Heart left ventricle (tissue), 16 donors: ENCODE measurements at regions of chr12 and their contacts with region 1.

Region 1: GRCh38 chr12:9049520-9050133 is 60.3 kb downstream of the KLRG1 start:
- DNase-seq: no peak
- ATAC-seq: peak in 3 of 4 donors; percentile 40 to 50 (median 49)
- H3K4me3 ChIP-seq: no peak overlapping the region
- H3K27ac ChIP-seq: no peak overlapping the region
- H3K4me1 ChIP-seq: peaks cover 0 to 4% (median 0%) of the 10 kb centered on the region in 12 donors
- H3K27me3 ChIP-seq: no peaks in the 10 kb centered on the region
- CTCF ChIP-seq: peak; percentile 38 to 64 (median 52)
- POLR2A ChIP-seq: no peak

Region 2: DNA sequence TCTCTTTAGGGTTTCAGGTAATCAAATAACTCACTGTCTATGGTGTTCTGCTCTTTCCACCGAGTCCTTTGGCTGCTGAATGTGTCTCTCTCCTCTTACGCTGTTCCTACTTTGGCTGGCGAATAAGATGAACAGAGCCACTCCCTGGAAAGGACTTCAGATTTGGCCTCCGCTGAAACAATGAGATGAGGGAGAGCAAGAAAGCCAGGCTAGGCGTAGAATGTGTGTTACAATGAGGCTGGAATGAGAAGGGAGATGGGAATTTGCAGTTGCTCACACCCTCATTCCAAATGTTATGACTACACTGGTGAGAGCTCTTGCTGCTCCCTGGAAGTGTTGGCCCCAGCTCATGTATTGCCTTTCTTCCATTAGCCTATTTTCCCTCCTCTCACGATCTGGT is 387.0 kb before region 1 on chr12 and contains the start of gene MFAP5:
- intact Hi-C with region 1: loop called in 1 of 10 experiments (anchors 5 kb)
- DNase-seq: peak in 2 of 5 donors; percentile 21 to 34
- ATAC-seq: peak; percentile 62 to 84 (median 74)
- H3K4me3 ChIP-seq: peak within 1 kb of the TSS in 10 of 12 donors; percentile 12 to 53 (median 30)
- H3K27ac ChIP-seq: peak within 1 kb of the TSS; percentile 11 to 78 (median 62)
- H3K4me1 ChIP-seq: peaks cover 0 to 6% (median 0%) of the 10 kb centered on the region in 12 donors
- H3K27me3 ChIP-seq: no peaks in the 10 kb centered on the region
- CTCF ChIP-seq: no peak
- POLR2A ChIP-seq: peak in 1 of 2 donors; percentile 21
- total RNA-seq, gene MFAP5: 12.4 to 137 (median 33.0) TPM

Region 3: GRCh38 chr12:8687846-8688601 is 361.6 kb before region 1 on chr12:
- intact Hi-C with region 1: loop called in 7 of 10 experiments (anchors 5 to 10 kb)
- DNase-seq: peak in 3 of 5 donors; percentile 31 to 41 (median 33)
- ATAC-seq: peak; percentile 60 to 97 (median 88)
- H3K4me3 ChIP-seq: no peak overlapping the region
- H3K27ac ChIP-seq: peak overlapping the region in 1 of 12 donors; percentile 78
- H3K4me1 ChIP-seq: peaks cover 0 to 27% (median 15%) of the 10 kb centered on the region in 12 donors
- H3K27me3 ChIP-seq: no peaks in the 10 kb centered on the region
- CTCF ChIP-seq: no peak
- POLR2A ChIP-seq: no peak

Region 4: DNA sequence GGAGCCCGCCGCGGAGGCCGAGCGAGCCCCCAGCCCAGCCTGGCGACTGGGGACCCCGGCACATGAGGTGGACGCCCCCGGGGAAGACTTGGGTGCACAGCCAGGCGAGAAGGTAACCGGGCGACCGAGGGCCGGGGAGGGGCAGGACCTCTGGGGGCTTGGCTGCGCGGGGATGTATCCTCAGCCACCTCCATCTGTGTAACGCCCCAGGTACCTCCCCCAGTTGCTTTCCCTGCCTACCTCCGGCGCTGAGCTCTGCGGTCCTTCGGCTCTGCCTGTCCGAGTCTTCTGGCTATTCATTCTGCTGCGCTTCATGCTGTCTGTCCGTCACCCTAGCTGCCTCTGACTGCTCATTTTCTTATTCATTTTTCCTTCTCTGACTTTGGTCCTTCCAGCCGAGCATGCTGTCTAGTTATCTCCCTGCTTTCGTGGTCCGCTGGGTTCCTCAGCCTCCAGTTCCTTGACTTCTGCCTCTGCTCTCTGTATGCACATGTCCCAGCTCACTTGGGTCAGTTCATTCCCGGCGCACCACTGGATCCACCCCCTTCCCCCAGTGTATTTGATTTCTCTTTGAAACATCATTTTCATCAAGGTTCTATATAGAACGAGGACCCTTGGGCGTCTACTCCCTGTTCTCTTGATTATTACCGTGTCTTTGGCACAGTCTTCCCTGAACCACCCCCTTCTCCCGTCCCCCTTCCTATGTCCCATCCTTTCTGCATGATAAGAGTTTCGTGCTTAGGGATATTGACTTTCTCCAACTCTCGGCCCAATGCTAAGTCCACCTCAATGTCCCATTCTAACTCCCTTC is 134.7 kb before region 1 on chr12:
- intact Hi-C with region 1: loop called in 1 of 10 experiments (anchors 10 kb)
- DNase-seq: peak; percentile 37 to 69 (median 52)
- ATAC-seq: peak; percentile 43 to 76 (median 72)
- H3K4me3 ChIP-seq: peak overlapping the region; percentile 61 to 91 (median 74)
- H3K27ac ChIP-seq: peak overlapping the region; percentile 3 to 93 (median 86)
- H3K4me1 ChIP-seq: peaks cover 0 to 40% (median 19%) of the 10 kb centered on the region in 12 donors
- H3K27me3 ChIP-seq: no peaks in the 10 kb centered on the region
- CTCF ChIP-seq: no peak
- POLR2A ChIP-seq: no peak